GM12878 (cell line): ENCODE measurements at regions of chr14 and their contacts with region 1.

Region 1: GRCh38 chr14:102591889-102592763 is at the start of gene RCOR1:
- DNase-seq: peak; percentile 80
- ATAC-seq: peak; percentile 89
- H3K4me3 ChIP-seq: peak within 1 kb of the TSS; percentile 96
- H3K27ac ChIP-seq: peak within 1 kb of the TSS; percentile 92
- H3K4me1 ChIP-seq: 0 out of 2 replicates have a peak, but pooled peaks cover 4% of the 10 kb centered on the region
- H3K27me3 ChIP-seq: no peaks in the 10 kb centered on the region; a peak in 1 of 4 replicates
- CTCF ChIP-seq: no peak
- EP300 ChIP-seq: peak in 1 of 2 experiments; percentile 43; a peak in 2 of 4 replicates
- POLR2A ChIP-seq: peak; percentile 92
- RAD21 ChIP-seq: no peak
- polyA plus RNA-seq, gene RCOR1: 1.9 to 2.2 TPM

Region 2: GRCh38 chr14:102304611-102305509 is 287.3 kb before region 1 on chr14 and contains the start of gene MOK:
- CTCF ChIA-PET with region 1: no interaction called
- POLR2A ChIA-PET with region 1: no interaction called
- RAD21 ChIA-PET with region 1: no interaction called
- SMC1A ChIA-PET with region 1: no interaction called
- in situ Hi-C with region 1: no loop called
- intact Hi-C with region 1: no loop called
- DNase-seq: peak; percentile 92
- ATAC-seq: peak; percentile 99
- H3K4me3 ChIP-seq: peak within 1 kb of the TSS; percentile 78
- H3K27ac ChIP-seq: no peak within 1 kb of the TSS
- H3K4me1 ChIP-seq: no peaks in the 10 kb centered on the region; the same call in 1 of the 2 replicates
- H3K27me3 ChIP-seq: no peaks in the 10 kb centered on the region
- CTCF ChIP-seq: no peak
- EP300 ChIP-seq: no peak
- POLR2A ChIP-seq: no peak
- RAD21 ChIP-seq: no peak
- polyA plus RNA-seq, gene MOK: 0.10 to 0.46 TPM

Region 3: GRCh38 chr14:102524466-102525218 is 67.5 kb before region 1 on chr14:
- CTCF ChIA-PET with region 1: interaction called, 23 read pairs
- POLR2A ChIA-PET with region 1: interaction called, 4 read pairs
- RAD21 ChIA-PET with region 1: interaction called, 14 read pairs
- SMC1A ChIA-PET with region 1: interaction called, 16 read pairs
- in situ Hi-C with region 1: no loop called
- intact Hi-C with region 1: loop called (anchors 2 kb)
- DNase-seq: peak; percentile 96
- ATAC-seq: peak; percentile 99
- H3K4me3 ChIP-seq: peak overlapping the region; percentile 84
- H3K27ac ChIP-seq: peak overlapping the region; percentile 43
- H3K4me1 ChIP-seq: no peaks in the 10 kb centered on the region; the same call in 1 of the 2 replicates
- H3K27me3 ChIP-seq: no peaks in the 10 kb centered on the region
- CTCF ChIP-seq: peak; percentile 96 to 97 (median 97)
- EP300 ChIP-seq: no peak
- POLR2A ChIP-seq: peak; percentile 83
- RAD21 ChIP-seq: peak; percentile 81

Region 4: DNA sequence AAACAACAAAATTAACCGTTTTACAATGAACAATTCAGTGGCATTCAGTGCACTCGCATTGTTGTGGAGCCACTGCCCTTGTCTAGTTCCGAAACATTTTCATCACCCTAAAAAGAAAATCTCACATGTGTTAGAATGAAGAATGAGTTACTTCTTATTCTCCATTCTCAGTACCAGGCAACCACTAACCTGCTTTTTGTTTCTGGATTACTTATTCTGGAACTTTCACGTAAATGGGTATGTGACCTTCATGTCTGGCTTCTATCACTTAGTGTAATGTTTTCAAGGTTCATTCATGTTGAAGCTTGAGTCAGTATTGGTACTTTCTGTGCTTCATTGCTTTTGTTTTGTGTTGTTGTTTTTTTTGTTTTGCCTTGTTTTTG is 15.9 kb after region 1 on chr14:
- CTCF ChIA-PET with region 1: interaction called, 78 read pairs
- POLR2A ChIA-PET with region 1: interaction called, 24 read pairs
- RAD21 ChIA-PET with region 1: interaction called, 23 read pairs
- SMC1A ChIA-PET with region 1: interaction called, 68 read pairs
- in situ Hi-C with region 1: no loop called
- intact Hi-C with region 1: loop called (anchors 2 kb)
- DNase-seq: peak; percentile 79
- ATAC-seq: peak; percentile 82
- H3K4me3 ChIP-seq: peak overlapping the region; percentile 46; the same call in 1 of the 2 replicates
- H3K27ac ChIP-seq: peak overlapping the region; percentile 28
- H3K4me1 ChIP-seq: peaks cover 63% of the 10 kb centered on the region
- H3K27me3 ChIP-seq: no peaks in the 10 kb centered on the region
- CTCF ChIP-seq: no peak
- EP300 ChIP-seq: 0 out of 4 replicates have a peak, but pooled peaks of 1 of the 2 experiments have one; percentile 17
- POLR2A ChIP-seq: no peak
- RAD21 ChIP-seq: no peak

Region 5: DNA sequence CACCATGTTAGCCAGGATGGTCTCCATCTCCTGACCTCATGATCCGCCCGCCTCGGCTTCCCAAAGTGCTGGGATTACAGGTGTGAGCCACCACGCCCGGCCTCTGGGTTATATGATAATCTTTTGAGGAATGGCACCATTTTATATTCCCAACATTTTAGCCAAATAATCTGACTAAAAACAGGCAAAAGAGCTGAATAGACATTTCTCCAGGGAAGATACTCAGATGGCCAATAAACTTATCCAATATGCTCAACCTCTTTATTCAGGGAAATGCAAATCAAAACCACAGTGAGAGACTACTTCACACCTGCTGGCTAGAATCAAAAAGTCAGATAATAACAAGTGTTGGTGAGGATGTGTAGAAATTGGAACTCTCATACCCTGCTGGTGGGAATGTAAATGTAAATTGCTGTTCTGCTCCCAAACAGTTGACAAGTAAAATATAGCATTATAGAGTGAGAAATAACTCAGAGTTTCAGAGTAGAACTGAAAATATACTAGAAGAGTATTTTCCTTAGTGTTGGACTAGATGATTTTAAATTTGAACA is 80.4 kb after region 1 on chr14:
- CTCF ChIA-PET with region 1: interaction called, 4 read pairs
- POLR2A ChIA-PET with region 1: no interaction called
- RAD21 ChIA-PET with region 1: no interaction called
- SMC1A ChIA-PET with region 1: interaction called, 6 read pairs
- in situ Hi-C with region 1: no loop called
- intact Hi-C with region 1: loop called (anchors 5 kb)
- DNase-seq: no peak
- ATAC-seq: no peak
- H3K4me3 ChIP-seq: no peak overlapping the region
- H3K27ac ChIP-seq: no peak overlapping the region
- H3K4me1 ChIP-seq: peaks cover 17% of the 10 kb centered on the region
- H3K27me3 ChIP-seq: no peaks in the 10 kb centered on the region
- CTCF ChIP-seq: no peak
- EP300 ChIP-seq: no peak
- POLR2A ChIP-seq: no peak
- RAD21 ChIP-seq: no peak

Region 6: GRCh38 chr14:102917469-102918211 is 325.5 kb after region 1 on chr14:
- CTCF ChIA-PET with region 1: interaction called, 3 read pairs
- POLR2A ChIA-PET with region 1: no interaction called
- RAD21 ChIA-PET with region 1: no interaction called
- SMC1A ChIA-PET with region 1: no interaction called
- in situ Hi-C with region 1: no loop called
- intact Hi-C with region 1: loop called (anchors 10 kb)
- DNase-seq: no peak
- ATAC-seq: peak; percentile 68
- H3K4me3 ChIP-seq: no peak overlapping the region
- H3K27ac ChIP-seq: peak overlapping the region; percentile 17
- H3K4me1 ChIP-seq: peaks cover 22% of the 10 kb centered on the region
- H3K27me3 ChIP-seq: no peaks in the 10 kb centered on the region; a peak in 2 of 4 replicates
- CTCF ChIP-seq: peak; percentile 73 to 82 (median 75)
- EP300 ChIP-seq: no peak
- POLR2A ChIP-seq: peak; percentile 45
- RAD21 ChIP-seq: peak; percentile 84